SK-N-SH (cell line): ENCODE measurements at regions of chr6 and their contacts with region 1.

Region 1: DNA sequence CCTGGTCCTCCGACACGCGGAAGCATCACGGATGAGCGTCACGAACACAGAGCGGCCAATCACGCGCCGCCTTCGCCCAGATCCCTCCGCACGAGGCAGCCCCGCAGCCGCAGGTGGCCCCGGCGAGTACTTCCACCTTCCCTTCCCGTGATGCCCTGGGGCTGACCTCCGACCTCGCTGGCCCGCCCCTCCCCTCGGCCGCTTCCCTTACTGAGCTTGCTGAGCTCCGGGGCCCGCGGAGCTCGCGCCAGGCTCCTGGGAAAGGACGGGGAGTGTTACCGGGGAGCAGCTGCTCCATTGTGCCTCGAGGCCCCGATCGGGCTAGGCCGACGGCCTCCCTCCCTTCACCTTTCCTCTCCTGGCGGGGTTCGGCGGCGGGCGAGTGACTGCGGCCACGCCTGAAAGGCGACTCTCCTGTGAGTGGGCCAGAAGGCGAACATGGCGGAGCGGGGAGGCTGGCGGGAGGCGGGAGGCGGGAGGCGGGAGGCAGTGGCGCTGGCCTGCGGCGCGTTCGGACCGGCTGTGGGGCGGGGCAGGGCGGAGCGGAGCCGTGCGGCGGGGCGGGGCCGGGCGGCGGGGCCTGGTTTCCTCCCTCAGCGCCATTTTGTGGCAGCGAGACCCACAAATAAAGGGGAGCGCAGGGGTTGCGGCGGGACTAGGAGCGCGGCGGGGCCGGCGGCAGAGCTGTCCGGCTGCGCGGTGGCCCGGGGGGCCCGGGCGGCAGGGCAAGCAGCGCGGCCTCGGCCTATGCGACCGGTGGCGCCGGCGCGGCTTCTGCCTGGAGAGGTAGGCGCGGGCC is at the start of gene WTAP:
- DNase-seq: peak; percentile 95
- H3K4me3 ChIP-seq: peak within 1 kb of the TSS; percentile 82 to 85
- H3K27ac ChIP-seq: peak within 1 kb of the TSS; percentile 97 to 99
- H3K4me1 ChIP-seq: peaks cover 4 to 9% of the 10 kb centered on the region in 2 experiments; a peak in 3 of 4 replicates
- H3K27me3 ChIP-seq: no peaks in the 10 kb centered on the region
- CTCF ChIP-seq: no peak
- EP300 ChIP-seq: 0 out of 4 replicates have a peak, but pooled peaks of 1 of the 2 experiments have one; percentile 28
- RAD21 ChIP-seq: no peak
- polyA plus RNA-seq, gene WTAP: 12.8 and 14.0 TPM in 2 replicates

Region 2: GRCh38 chr6:159693128-159693893 is 33.8 kb before region 1 on chr6 and contains the start of gene SOD2:
- CTCF ChIA-PET with region 1: interaction called, 21 read pairs
- POLR2A ChIA-PET with region 1: interaction called, 12 read pairs
- DNase-seq: peak; percentile 93
- H3K4me3 ChIP-seq: peak within 1 kb of the TSS; percentile 74 to 80
- H3K27ac ChIP-seq: peak within 1 kb of the TSS; percentile 68 to 91
- H3K4me1 ChIP-seq: peaks cover 5 to 10% of the 10 kb centered on the region in 2 experiments; a peak in 3 of 4 replicates
- H3K27me3 ChIP-seq: no peaks in the 10 kb centered on the region
- CTCF ChIP-seq: no peak
- EP300 ChIP-seq: 0 out of 4 replicates have a peak, but pooled peaks of 1 of the 2 experiments have one; percentile 18
- RAD21 ChIP-seq: no peak
- polyA plus RNA-seq, gene SOD2: 26.8 and 29.0 TPM in 2 replicates

Region 3: DNA sequence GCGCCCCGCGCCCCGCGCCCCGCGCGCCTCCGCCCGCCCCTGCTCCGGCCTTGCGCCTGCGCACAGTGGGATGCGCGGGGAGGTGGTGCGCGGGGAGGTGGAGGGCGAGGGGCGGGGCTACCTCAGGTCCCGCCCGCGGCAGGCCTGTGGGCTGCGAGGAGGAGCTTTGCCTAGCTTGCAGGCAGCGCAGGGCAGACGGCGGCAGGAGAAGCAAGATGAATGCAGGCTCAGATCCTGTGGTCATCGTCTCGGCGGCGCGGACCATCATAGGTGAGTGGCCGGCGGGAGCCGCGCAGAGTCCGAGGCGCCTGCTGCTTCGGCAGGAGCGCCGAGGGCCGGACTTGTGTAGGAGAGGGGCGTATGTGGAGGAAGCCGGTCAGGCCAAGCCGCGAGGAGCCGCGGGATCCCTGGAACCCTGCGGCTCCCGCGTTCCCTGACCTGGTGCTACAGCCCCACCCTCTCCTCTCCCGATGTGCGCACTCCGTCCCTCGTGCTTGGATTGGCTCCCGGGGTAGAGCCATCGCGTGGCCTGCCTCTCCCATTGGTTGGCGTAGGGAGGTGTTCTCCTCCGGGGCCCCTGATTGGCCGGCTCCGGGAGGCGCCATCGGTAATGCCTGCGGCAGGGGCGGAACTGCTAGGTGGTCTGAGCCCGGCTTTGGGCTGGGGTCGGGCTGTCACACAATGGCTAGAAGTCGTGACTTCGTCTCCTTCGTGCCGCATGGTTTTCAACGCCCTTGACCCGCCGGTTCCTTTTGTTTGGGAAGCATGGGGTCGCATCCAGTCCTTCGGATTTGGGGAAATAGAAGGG is 35.0 kb after region 1 on chr6 and contains the start of gene ACAT2:
- CTCF ChIA-PET with region 1: interaction called, 3 read pairs
- POLR2A ChIA-PET with region 1: interaction called, 11 read pairs
- DNase-seq: peak; percentile 99
- H3K4me3 ChIP-seq: peak within 1 kb of the TSS; percentile 75 to 85
- H3K27ac ChIP-seq: peak within 1 kb of the TSS; percentile 94 to 97
- H3K4me1 ChIP-seq: peaks cover 13 to 20% of the 10 kb centered on the region in 2 experiments
- H3K27me3 ChIP-seq: no peaks in the 10 kb centered on the region
- CTCF ChIP-seq: no peak
- EP300 ChIP-seq: no peak
- RAD21 ChIP-seq: no peak
- polyA plus RNA-seq, gene ACAT2: 13.1 and 14.5 TPM in 2 replicates

Region 4: DNA sequence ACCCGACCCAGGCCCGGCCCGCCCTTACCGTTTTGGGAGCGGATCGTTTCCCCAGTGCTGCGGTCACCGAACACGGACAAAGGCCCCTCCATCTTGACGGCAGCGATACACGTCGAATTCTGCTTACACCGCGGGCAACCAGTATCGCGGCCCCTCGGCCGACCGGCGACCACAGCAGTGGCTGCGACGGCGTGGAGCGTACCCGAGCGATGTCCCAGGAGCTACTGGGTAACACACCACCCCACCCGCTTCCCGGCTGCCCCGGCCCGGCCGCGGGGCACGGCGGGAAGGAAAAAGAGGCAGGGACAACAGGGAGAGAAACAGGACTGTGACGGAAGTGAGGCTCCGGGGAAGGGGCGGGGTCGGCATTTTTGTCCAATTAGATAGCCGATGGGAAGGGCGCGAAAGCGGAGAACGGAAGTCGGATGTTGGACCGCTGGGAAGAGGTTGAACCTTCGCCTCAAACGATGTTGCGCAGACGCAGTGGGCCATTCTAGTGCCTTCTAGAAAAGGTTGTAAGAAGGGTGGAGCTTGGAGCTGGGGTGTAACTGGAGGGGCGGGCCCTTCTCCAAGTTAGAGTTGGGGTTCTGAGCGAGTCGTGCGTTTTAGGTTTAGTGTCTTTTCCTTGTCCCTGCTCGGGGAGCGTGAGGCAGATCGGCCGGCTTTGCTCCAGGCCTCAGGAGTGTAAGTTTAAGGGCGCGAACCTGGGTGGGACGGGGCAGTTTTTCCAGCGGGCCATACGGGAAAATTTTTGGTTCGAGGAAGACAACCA is 62.4 kb after region 1 on chr6 and contains the start of gene TCP1:
- CTCF ChIA-PET with region 1: interaction called, 3 read pairs
- POLR2A ChIA-PET with region 1: interaction called, 25 read pairs
- DNase-seq: peak; percentile 97
- H3K4me3 ChIP-seq: peak within 1 kb of the TSS; percentile 73 to 90
- H3K27ac ChIP-seq: peak within 1 kb of the TSS; percentile 80 to 94
- H3K4me1 ChIP-seq: peaks cover 10 to 22% of the 10 kb centered on the region in 2 experiments; a peak in 3 of 4 replicates
- H3K27me3 ChIP-seq: no peaks in the 10 kb centered on the region
- CTCF ChIP-seq: no peak
- EP300 ChIP-seq: peak; percentile 12 to 91; a peak in 2 of 4 replicates
- RAD21 ChIP-seq: no peak
- polyA plus RNA-seq, gene TCP1: 138 and 154 TPM in 2 replicates